IMR-90 (cell line): ENCODE measurements at regions of chr12 and their contacts with region 1.

Region 1: GRCh38 chr12:58529897-58530741 is 390.2 kb downstream of the LRIG3 start:
- DNase-seq: peak; percentile 97
- ATAC-seq: peak; percentile 74
- H3K4me3 ChIP-seq: no peak overlapping the region
- H3K27ac ChIP-seq: peak overlapping the region; percentile 97
- H3K4me1 ChIP-seq: peaks cover 7% of the 10 kb centered on the region
- H3K27me3 ChIP-seq: no peaks in the 10 kb centered on the region
- CTCF ChIP-seq: no peak
- POLR2A ChIP-seq: no peak
- RAD21 ChIP-seq: no peak

Region 2: DNA sequence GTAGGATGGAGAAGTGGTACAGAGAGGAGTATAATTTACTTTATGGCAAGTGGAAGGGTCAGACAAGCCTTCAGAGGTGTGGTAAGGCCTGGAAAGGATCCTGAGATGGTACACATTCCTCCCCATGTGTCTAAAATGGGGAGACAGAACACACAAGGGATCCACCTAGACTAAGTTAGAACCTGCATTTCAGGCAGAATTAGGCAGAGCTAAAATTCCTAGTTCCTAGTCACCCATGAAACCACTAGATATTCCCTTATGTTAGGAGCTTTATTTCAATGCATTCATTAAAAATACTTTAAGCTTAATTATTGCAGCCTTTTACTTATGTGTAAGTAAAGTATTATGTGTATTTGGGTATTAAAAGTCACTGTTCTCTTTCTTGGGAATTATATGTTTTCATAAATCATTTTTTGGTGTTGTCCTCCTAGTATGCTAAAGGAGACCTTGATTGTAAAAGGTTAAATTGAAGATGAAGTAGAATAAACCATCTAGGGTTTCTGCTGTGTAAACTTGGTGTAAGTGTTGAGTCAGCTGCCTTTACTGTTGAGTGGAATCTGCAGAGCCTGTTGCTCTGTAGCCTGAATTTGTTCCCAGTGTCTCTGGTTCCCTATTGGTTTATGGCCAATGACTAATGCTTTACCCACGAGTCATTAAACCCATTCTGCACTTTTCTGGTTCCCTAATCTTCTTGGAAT is 165.6 kb before region 1 on chr12:
- CTCF ChIA-PET with region 1: no interaction called
- POLR2A ChIA-PET with region 1: no interaction called
- dilution Hi-C with region 1: no loop called
- in situ Hi-C with region 1: loop called (anchors 10 kb)
- intact Hi-C with region 1: loop called (anchors 1 kb)
- DNase-seq: peak; percentile 99
- ATAC-seq: peak; percentile 96
- H3K4me3 ChIP-seq: no peak overlapping the region
- H3K27ac ChIP-seq: peak overlapping the region; percentile 94
- H3K4me1 ChIP-seq: peaks cover 24% of the 10 kb centered on the region
- H3K27me3 ChIP-seq: no peaks in the 10 kb centered on the region
- CTCF ChIP-seq: no peak
- POLR2A ChIP-seq: no peak
- RAD21 ChIP-seq: no peak

Region 3: DNA sequence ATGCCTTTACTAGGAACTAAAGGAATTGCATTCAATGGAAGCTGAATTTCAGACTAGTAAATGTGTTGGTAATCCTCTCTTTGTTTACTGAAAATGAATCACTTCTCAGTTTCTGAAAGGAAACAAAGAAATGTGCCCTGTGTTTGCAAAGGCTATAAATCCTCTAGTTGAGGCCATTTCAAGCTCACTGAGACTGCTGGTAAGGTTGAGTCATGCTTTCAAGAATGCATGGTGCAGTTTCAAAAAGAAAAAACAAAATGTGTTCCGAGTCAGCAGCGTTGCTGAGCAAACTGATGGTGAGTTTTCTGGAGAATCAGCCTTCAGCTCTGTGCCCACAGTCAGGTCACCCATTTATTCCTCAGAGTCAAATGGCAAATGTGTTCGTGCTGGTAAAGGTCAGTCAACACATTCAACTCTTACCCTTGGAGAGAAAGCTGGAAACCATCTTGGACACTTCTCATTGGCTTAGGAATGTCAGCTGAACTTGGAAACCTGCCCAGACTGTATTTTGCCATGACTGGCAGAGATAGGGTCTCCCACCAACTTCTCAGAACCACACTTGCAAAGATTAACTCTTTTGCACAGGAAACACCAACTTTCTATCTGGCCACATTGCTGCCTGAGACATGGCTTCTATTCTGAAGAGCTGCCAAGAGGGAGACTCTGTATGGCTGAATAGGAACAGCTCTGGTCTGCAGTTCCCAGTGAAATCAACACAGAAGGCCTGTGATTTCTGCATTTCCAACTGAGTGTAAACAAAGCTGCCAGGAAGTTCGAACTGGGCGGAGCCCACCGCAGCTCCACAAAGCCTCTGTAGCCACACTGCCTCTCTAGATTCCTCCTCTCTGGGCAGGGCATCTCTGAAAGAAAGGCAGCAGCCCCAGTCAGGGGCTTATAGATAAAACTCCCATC is 104.4 kb before region 1 on chr12:
- CTCF ChIA-PET with region 1: no interaction called
- POLR2A ChIA-PET with region 1: no interaction called
- dilution Hi-C with region 1: no loop called
- in situ Hi-C with region 1: no loop called
- intact Hi-C with region 1: loop called (anchors 2 kb)
- DNase-seq: peak; percentile 94
- ATAC-seq: peak; percentile 90
- H3K4me3 ChIP-seq: peak overlapping the region; percentile 8; the same call in 1 of the 2 replicates
- H3K27ac ChIP-seq: peak overlapping the region; percentile 79
- H3K4me1 ChIP-seq: peaks cover 12% of the 10 kb centered on the region
- H3K27me3 ChIP-seq: no peaks in the 10 kb centered on the region
- CTCF ChIP-seq: no peak
- POLR2A ChIP-seq: no peak
- RAD21 ChIP-seq: 0 out of 2 replicates have a peak, but pooled peaks have one; percentile 15

Region 4: DNA sequence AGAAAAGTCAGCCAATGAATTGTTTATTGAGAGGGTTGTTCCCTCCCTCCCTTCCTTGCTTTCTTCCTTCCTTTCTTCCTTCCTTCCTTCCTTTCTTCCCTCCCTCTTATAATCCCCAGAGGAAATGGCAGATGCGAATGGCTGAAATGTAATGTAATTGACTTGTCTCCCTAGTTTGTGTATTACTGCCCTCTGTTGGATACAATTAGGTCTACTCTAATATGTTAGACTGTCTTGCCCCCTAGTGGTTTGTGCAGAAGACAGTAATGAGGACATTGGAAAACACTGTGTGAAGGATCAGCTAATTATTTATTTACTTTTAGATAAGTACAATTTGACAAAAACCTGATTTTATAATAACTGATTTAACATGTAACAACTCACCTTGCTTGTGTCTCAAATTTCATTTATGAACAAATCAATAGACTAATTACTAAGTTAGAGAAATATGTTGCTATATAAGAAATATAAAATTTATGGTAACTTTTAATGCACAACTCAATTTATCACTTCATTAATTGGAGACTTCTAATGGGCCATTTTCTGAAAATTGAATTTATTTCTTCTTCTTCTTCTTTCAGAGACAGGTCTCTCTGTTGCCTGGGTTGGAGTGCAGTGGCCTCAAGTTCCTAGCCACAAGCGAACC is 620.0 kb after region 1 on chr12:
- CTCF ChIA-PET with region 1: no interaction called
- POLR2A ChIA-PET with region 1: no interaction called
- dilution Hi-C with region 1: no loop called
- in situ Hi-C with region 1: loop called (anchors 10 kb)
- intact Hi-C with region 1: no loop called
- DNase-seq: peak; percentile 84
- ATAC-seq: peak; percentile 96
- H3K4me3 ChIP-seq: no peak overlapping the region
- H3K27ac ChIP-seq: peak overlapping the region; percentile 2; the same call in 1 of the 2 replicates
- H3K4me1 ChIP-seq: peaks cover 4% of the 10 kb centered on the region; the same call in 1 of the 2 replicates
- H3K27me3 ChIP-seq: no peaks in the 10 kb centered on the region
- CTCF ChIP-seq: peak; percentile 100
- POLR2A ChIP-seq: no peak
- RAD21 ChIP-seq: peak; percentile 83